ENCODE measurements at regions of chr20 and their contacts with region 1.

Region 1: DNA sequence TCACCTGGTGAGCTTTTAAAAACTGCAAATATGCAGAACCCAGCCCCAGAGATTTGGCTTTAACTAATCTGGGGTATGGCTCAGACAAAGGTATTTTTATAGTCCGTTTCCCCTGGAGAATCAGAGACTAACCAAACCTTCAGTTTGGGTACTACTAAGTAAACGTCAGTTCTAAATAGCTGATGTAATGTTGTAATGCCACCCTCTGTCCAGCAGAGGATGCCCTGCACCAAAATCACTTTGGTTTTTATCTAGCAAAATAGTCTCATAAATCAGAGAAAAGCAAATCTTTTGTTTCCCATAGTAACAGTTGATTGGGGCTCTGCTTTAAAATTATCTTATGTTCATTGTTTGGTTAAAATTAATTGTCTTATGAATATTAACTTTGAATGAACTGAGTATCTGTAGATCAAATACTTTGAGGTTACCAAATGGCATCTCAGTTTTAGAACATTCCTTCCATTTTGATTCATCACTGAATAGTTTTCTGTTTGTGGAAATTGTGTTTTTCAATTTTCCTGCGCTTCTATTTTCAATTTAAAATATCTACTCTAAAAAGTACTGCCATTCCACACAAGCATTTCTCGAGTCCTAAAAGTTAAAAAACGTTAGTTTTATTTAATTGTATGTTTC is 278.3 kb upstream of the PLCB4 start:
- DNase-seq: no peak

Region 2: GRCh38 chr20:8764344-8764962 is 26.1 kb before region 1 on chr20:
- intact Hi-C with region 1: no loop called
- DNase-seq: no peak

Region 3: GRCh38 chr20:8842525-8842924 is 52.0 kb after region 1 on chr20:
- intact Hi-C with region 1: loop called in 1 of 2 experiments (anchors 10 kb)
- DNase-seq: no peak

Region 4: DNA sequence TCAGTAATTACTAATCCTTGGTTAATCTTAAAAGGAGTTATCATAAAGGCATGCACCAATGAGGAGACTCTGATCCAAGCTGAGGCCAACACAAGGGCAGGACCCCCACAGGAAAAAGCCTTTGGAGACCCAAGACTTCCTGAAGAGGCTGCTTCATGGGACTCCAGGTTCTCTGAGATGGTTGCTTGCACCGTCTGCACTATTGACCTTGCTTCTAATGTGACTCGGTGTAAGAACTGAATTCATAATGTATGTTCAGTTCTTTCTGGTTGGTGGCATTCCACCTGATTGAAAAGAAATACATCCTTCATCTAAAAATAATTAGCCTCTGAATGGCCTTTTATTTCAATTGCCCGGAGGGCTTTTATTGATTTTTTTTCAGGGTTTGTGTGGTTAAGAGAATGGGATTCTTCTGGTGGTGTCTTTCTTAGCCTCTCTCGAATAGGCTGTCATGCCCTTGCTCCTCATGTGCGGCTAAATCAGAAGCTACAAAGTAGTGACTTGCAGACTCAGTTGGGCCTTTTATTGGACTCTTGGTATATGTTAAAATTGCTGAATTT is 76.7 kb after region 1 on chr20:
- intact Hi-C with region 1: no loop called
- DNase-seq: no peak